ENCODE measurements at regions of chr19 and their contacts with region 1.

Region 1: GRCh38 chr19:37691881-37692504 is 27.6 kb downstream of the ZNF607 start:
- DNase-seq: peak; percentile 90
- ATAC-seq: peak; percentile 97
- H3K4me3 ChIP-seq: peak overlapping the region; percentile 53 to 80 (median 68)
- H3K4me3 Mint-ChIP-seq: peak overlapping the region; percentile 99
- H3K27ac ChIP-seq: peak overlapping the region; percentile 68 to 74
- H3K27ac Mint-ChIP-seq: peak overlapping the region; percentile 98
- H3K4me1 ChIP-seq: peaks cover 0 to 4% of the 10 kb centered on the region in 2 donors
- H3K4me1 Mint-ChIP-seq: peaks cover 11% of the 10 kb centered on the region
- H3K27me3 ChIP-seq: no peaks in the 10 kb centered on the region
- H3K27me3 Mint-ChIP-seq: no peaks in the 10 kb centered on the region
- CTCF ChIP-seq: peak; percentile 27

Region 2: GRCh38 chr19:37370880-37371661 is 320.9 kb before region 1 on chr19 and contains the start of gene ZNF527:
- CTCF ChIA-PET with region 1: no interaction called
- POLR2A ChIA-PET with region 1: no interaction called
- intact Hi-C with region 1: loop called (anchors 2 kb)
- DNase-seq: peak; percentile 98
- ATAC-seq: peak; percentile 96
- H3K4me3 ChIP-seq: peak within 1 kb of the TSS; percentile 59 to 87 (median 79)
- H3K4me3 Mint-ChIP-seq: peak within 1 kb of the TSS; percentile 99
- H3K27ac ChIP-seq: peak within 1 kb of the TSS; percentile 73 to 87
- H3K27ac Mint-ChIP-seq: peak within 1 kb of the TSS; percentile 98
- H3K4me1 ChIP-seq: peaks cover 5 to 14% of the 10 kb centered on the region in 2 donors
- H3K4me1 Mint-ChIP-seq: peaks cover 12% of the 10 kb centered on the region
- H3K27me3 ChIP-seq: no peaks in the 10 kb centered on the region
- H3K27me3 Mint-ChIP-seq: no peaks in the 10 kb centered on the region
- CTCF ChIP-seq: peak; percentile 12
- total RNA-seq, gene ZNF527: 9.0 and 11.4 TPM in 2 replicates

Region 3: DNA sequence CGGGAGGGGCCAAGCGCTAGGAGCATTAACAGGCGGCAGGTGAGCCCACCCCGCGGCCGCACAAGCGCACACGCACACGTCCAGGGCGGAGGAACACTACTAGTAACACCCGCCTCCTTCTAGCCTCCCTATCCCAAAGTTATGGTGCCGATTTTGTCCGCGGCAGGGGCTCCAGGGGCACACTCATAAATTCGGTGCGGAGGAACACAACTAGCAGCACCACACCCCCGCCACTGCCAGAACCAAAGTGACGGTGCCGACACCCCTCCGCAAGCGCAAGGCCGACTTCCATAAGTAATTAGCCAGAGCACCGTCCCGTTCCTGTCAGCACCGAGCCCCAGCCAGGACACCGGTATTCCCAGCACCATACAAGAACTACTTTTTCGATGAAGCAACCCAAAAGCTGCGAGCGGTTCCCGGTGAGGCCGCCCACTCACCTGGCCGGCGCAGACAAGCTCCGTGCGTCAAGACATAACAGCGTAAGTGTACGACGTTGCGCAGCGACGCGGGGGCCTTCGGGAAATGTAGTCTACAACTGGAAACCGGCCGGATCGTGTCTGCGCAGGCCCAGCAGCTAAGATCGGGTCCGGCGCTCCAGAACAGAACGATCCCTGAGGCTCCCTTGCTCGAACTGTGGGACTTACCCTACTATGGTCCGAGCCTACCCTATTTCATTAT is 97.5 kb before region 1 on chr19 and contains the starts of genes ZNF540 and ZNF571:
- CTCF ChIA-PET with region 1: no interaction called
- POLR2A ChIA-PET with region 1: interaction called, 8 read pairs
- intact Hi-C with region 1: loop called (anchors 1 kb)
- DNase-seq: peak; percentile 95
- ATAC-seq: peak; percentile 96
- H3K4me3 ChIP-seq: peak within 1 kb of the TSS; percentile 67 to 88 (median 87)
- H3K4me3 Mint-ChIP-seq: peak within 1 kb of the TSS; percentile 99
- H3K27ac ChIP-seq: peak within 1 kb of the TSS; percentile 93 to 96
- H3K27ac Mint-ChIP-seq: peak within 1 kb of the TSS; percentile 99
- H3K4me1 ChIP-seq: peaks cover 11 to 14% of the 10 kb centered on the region in 2 donors
- H3K4me1 Mint-ChIP-seq: peaks cover 25% of the 10 kb centered on the region
- H3K27me3 ChIP-seq: no peaks in the 10 kb centered on the region
- H3K27me3 Mint-ChIP-seq: no peaks in the 10 kb centered on the region
- CTCF ChIP-seq: no peak
- total RNA-seq, gene ZNF540: 10.7 and 10.8 TPM in 2 replicates
- total RNA-seq, gene ZNF571: 10.0 and 13.1 TPM in 2 replicates

Region 4: DNA sequence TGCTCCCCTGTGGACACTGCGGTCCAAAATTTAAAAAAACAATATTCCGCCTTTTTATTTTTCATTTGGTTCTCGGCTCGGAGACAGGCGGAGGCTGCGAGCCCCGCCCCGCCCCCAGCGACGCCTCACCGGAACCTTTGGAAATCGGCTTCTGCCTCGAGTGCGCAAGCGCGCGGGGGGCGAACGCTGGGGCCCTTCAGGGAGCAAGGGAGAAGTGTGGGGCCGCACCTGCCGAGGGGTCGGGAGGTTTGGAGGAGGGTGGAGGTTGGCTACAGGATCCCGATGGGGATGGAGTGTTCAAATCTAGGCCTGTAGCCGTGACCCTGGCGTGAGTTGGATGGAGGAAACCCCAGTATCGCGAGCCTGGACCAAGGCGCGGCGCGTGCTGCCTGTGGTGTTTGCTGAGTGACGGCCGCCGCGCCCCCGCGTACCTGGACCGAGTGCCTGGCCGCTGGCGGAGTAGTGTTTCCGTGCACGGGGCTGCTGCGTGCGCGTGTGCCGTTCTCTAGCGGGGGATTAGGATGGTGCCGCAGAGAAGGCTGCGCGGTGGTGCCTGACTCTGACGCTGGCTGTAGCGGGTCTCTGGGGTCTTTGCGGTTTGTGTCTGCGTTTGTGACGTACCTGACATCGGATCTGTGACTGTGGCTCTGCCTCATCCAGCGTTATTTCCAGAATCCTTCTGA is 36.2 kb before region 1 on chr19:
- CTCF ChIA-PET with region 1: no interaction called
- POLR2A ChIA-PET with region 1: interaction called, 6 read pairs
- intact Hi-C with region 1: loop called (anchors 1 kb)
- DNase-seq: peak; percentile 89
- ATAC-seq: peak; percentile 69
- H3K4me3 ChIP-seq: peak overlapping the region; percentile 36 to 89 (median 80)
- H3K4me3 Mint-ChIP-seq: peak overlapping the region; percentile 98
- H3K27ac ChIP-seq: peak overlapping the region; percentile 91 to 93
- H3K27ac Mint-ChIP-seq: peak overlapping the region; percentile 97
- H3K4me1 ChIP-seq: peaks cover 15 to 19% of the 10 kb centered on the region in 2 donors
- H3K4me1 Mint-ChIP-seq: peaks cover 30% of the 10 kb centered on the region
- H3K27me3 ChIP-seq: no peaks in the 10 kb centered on the region
- H3K27me3 Mint-ChIP-seq: no peaks in the 10 kb centered on the region
- CTCF ChIP-seq: no peak

Region 5: DNA sequence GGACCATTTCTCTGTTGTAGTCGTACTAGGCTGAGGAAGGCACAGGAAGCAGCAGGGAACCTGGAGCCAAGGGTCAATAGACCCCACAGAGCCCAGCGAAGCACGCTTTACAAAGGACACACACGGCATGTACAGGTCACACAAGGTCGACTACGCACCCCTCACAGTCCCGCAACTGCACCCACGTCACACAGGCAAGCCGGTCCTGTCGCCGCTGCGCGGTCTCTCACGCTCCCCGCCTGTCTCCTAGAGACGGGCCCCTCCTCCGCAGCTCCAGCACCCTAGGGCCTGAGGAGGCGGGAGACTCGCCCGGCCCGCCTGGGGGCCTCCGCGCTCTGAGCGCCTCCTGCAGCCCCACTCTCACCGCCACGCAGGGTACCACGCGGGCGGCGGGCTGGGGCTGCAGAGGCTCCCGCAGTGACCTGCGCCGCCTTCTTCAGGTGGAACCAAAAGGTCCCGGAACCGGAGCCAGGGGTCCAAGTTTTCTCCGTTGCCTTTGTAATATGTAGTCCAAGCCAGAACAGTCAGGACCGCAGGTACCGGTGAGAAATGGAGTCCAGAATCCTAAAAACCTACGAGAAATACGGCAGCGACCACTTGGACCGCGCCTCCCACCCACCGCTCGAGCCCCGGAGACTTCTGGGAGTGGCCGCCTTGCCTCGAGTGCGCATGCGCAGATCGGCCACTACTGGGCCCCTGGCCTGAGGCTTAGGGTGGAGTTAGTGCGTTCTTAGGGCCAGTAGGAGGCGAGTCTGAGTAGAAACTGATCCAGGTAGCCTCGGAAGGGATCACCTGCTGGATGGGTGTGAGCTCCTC is 27.3 kb after region 1 on chr19 and contains the start of gene ZNF607:
- CTCF ChIA-PET with region 1: no interaction called
- POLR2A ChIA-PET with region 1: no interaction called
- intact Hi-C with region 1: loop called (anchors 1 kb)
- DNase-seq: peak; percentile 94
- ATAC-seq: peak; percentile 95
- H3K4me3 ChIP-seq: peak within 1 kb of the TSS; percentile 51 to 86 (median 82)
- H3K4me3 Mint-ChIP-seq: peak within 1 kb of the TSS; percentile 90
- H3K27ac ChIP-seq: peak within 1 kb of the TSS; percentile 62 to 68
- H3K27ac Mint-ChIP-seq: peak within 1 kb of the TSS; percentile 89
- H3K4me1 ChIP-seq: peaks cover 7 to 12% of the 10 kb centered on the region in 2 donors
- H3K4me1 Mint-ChIP-seq: peaks cover 14% of the 10 kb centered on the region
- H3K27me3 ChIP-seq: no peaks in the 10 kb centered on the region
- H3K27me3 Mint-ChIP-seq: no peaks in the 10 kb centered on the region
- CTCF ChIP-seq: peak; percentile 52
- total RNA-seq, gene ZNF607: 19.4 and 21.5 TPM in 2 replicates

Region 6: GRCh38 chr19:37779127-37780005 is 87.4 kb after region 1 on chr19 and contains the start of gene ZNF573:
- CTCF ChIA-PET with region 1: interaction called, 4 read pairs
- POLR2A ChIA-PET with region 1: interaction called, 3 read pairs
- intact Hi-C with region 1: loop called (anchors 2 kb)
- DNase-seq: peak; percentile 91
- ATAC-seq: peak; percentile 84
- H3K4me3 ChIP-seq: peak within 1 kb of the TSS; percentile 71 to 81 (median 74)
- H3K4me3 Mint-ChIP-seq: peak within 1 kb of the TSS; percentile 96
- H3K27ac ChIP-seq: peak within 1 kb of the TSS; percentile 86 to 93
- H3K27ac Mint-ChIP-seq: peak within 1 kb of the TSS; percentile 97
- H3K4me1 ChIP-seq: peaks cover 7 to 11% of the 10 kb centered on the region in 2 donors
- H3K4me1 Mint-ChIP-seq: peaks cover 39% of the 10 kb centered on the region
- H3K27me3 ChIP-seq: no peaks in the 10 kb centered on the region
- H3K27me3 Mint-ChIP-seq: no peaks in the 10 kb centered on the region
- CTCF ChIP-seq: peak; percentile 18
- total RNA-seq, gene ZNF573: 28.8 and 31.1 TPM in 2 replicates